IMR-90 (cell line): ENCODE measurements at regions of chr5 and their contacts with region 1.

Region 1: DNA sequence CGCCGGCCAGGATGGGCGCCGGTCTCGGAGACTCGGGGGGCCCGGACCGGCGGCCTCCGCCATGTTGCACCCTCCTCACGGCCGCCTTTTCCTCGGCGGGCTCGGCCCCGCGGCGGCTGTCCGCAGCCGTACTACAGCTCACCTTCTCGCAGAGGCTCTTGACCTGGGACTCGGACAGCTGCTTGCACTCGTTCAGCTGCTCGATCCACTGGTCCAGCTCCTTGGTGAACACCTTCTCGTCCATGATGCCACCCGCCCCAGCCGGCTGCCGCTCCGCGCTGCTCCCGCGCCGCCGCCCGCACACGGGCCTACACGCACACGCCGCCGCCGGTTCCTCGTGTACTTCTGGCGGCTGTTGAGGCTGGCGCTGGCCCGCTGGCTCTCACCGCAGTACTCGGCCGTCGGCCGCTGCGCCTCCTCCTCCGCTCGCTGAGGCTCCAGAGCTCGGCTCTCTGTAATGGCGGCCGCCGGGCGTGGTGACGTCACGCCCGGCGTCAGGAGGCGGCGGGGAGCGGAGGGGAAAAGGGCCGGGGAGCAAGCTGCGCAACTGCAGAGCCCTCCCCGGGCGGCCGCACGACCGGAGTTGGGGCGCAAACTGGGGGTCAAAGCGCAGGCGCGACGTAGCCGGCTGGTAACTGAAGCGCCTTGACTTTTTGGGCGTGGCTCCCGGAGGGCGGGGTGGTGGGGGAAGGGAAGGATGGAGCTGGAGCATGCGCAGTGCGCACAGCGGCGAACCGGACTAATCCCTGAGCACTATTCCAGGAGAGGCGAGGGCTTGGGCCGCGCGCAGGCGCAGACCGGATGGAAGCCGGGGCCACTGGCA is at the start of gene PPP2CA:
- DNase-seq: peak; percentile 98
- ATAC-seq: peak; percentile 93
- H3K4me3 ChIP-seq: peak within 1 kb of the TSS; percentile 68
- H3K27ac ChIP-seq: peak within 1 kb of the TSS; percentile 90
- H3K4me1 ChIP-seq: peaks cover 6% of the 10 kb centered on the region
- H3K27me3 ChIP-seq: no peaks in the 10 kb centered on the region
- CTCF ChIP-seq: no peak
- POLR2A ChIP-seq: peak; percentile 88
- RAD21 ChIP-seq: no peak
- total RNA-seq, gene PPP2CA: 70.6 and 191 TPM in 2 replicates

Region 2: DNA sequence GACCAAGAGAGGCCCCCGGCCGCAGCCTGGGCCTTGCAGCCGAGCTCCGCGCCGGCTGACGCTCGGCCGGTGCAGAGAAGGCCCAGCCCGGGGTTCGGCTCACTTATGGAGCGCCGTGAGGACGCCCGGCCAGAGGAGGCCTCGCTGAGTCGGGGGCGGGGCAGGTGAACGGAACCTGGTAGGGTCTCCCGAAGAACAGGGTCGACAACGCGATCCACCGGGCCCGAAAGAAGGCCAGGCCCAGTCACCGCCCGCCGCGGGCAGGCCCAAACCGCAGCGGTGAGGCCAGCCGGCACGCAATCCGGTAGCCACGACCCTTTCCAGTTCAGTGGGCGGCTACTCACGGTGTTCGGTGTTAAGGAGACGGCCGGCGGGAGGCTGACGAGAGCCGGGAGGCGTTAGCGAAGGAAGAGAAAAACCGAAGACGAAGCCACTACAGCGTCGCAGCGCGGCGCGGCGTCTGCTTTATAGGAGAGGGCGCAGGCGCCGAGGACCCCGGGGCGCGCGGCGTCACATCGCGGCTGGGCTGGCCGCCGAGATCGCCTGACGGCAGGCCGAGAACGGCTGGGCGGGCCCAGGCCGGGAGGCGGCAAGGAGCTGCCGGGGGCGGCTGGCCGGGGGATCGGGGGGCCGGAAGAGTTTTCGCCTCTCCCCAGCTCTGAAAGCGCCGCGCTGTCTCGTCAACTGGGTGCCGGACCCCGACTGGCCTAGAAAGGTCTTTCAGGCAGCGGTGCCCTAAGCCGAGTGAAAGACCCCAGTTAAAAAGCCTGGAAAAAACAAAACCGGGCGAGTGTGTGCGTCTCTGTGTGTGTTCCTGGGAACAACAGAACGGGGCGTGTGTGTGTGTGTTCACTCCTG is 49.1 kb before region 1 on chr5 and contains the start of gene SKP1:
- CTCF ChIA-PET with region 1: interaction called, 3 read pairs
- POLR2A ChIA-PET with region 1: no interaction called
- dilution Hi-C with region 1: no loop called
- in situ Hi-C with region 1: no loop called
- intact Hi-C with region 1: loop called (anchors 2 kb)
- DNase-seq: peak; percentile 71
- ATAC-seq: peak; percentile 91
- H3K4me3 ChIP-seq: peak within 1 kb of the TSS; percentile 92
- H3K27ac ChIP-seq: peak within 1 kb of the TSS; percentile 94
- H3K4me1 ChIP-seq: no peaks in the 10 kb centered on the region; the same call in 1 of the 2 replicates
- H3K27me3 ChIP-seq: no peaks in the 10 kb centered on the region
- CTCF ChIP-seq: no peak
- POLR2A ChIP-seq: peak; percentile 100
- RAD21 ChIP-seq: no peak
- total RNA-seq, gene SKP1: 206 and 360 TPM in 2 replicates

Region 3: GRCh38 chr5:134209477-134210240 is 16.2 kb before region 1 on chr5:
- CTCF ChIA-PET with region 1: interaction called, 3 read pairs
- POLR2A ChIA-PET with region 1: interaction called, 3 read pairs
- dilution Hi-C with region 1: no loop called
- in situ Hi-C with region 1: no loop called
- intact Hi-C with region 1: loop called (anchors 1 kb)
- DNase-seq: no peak
- ATAC-seq: no peak
- H3K4me3 ChIP-seq: no peak overlapping the region
- H3K27ac ChIP-seq: no peak overlapping the region
- H3K4me1 ChIP-seq: peaks cover 6% of the 10 kb centered on the region
- H3K27me3 ChIP-seq: no peaks in the 10 kb centered on the region
- CTCF ChIP-seq: no peak
- POLR2A ChIP-seq: no peak
- RAD21 ChIP-seq: no peak

Region 4: GRCh38 chr5:134245101-134245604 is 19.3 kb after region 1 on chr5:
- CTCF ChIA-PET with region 1: interaction called, 4 read pairs
- POLR2A ChIA-PET with region 1: interaction called, 13 read pairs
- dilution Hi-C with region 1: no loop called
- in situ Hi-C with region 1: no loop called
- intact Hi-C with region 1: no loop called
- DNase-seq: peak; percentile 86
- ATAC-seq: peak; percentile 59
- H3K4me3 ChIP-seq: peak overlapping the region; percentile 27; the same call in 1 of the 2 replicates
- H3K27ac ChIP-seq: peak overlapping the region; percentile 76
- H3K4me1 ChIP-seq: peaks cover 25% of the 10 kb centered on the region
- H3K27me3 ChIP-seq: no peaks in the 10 kb centered on the region
- CTCF ChIP-seq: no peak
- POLR2A ChIP-seq: no peak
- RAD21 ChIP-seq: no peak

Region 5: DNA sequence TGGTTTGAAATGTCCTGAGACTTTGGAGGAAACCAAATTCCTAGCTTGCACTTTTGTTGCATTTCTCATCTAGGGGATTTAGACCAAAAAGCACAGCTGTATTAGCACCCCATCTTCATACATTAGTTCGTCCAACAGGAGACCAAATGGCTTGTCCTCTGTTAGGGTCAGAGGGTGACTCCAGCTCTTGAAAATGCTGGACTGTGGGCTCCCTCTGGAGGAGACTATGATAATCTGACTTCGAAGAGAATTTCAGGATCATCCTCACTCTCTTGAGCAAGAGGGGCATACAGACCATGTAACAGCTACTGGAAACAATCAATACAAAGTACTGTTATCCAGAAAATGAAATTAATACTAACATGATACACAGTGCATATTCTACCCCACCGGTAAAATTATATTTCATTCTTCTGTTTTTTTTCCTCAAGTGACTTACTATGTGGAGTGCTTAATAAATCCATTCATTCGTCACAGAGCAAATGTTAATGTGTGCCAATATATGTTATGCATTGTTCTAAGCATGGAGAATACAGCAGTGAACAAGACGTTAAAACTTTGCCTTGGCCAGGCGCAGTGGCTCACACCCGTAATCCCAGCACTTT is 63.8 kb after region 1 on chr5:
- CTCF ChIA-PET with region 1: interaction called, 5 read pairs
- POLR2A ChIA-PET with region 1: no interaction called
- dilution Hi-C with region 1: no loop called
- in situ Hi-C with region 1: no loop called
- intact Hi-C with region 1: loop called (anchors 2 kb)
- DNase-seq: peak; percentile 83
- ATAC-seq: peak; percentile 99
- H3K4me3 ChIP-seq: no peak overlapping the region
- H3K27ac ChIP-seq: no peak overlapping the region
- H3K4me1 ChIP-seq: no peaks in the 10 kb centered on the region
- H3K27me3 ChIP-seq: no peaks in the 10 kb centered on the region; the same call in 1 of the 2 replicates
- CTCF ChIP-seq: peak; percentile 92
- POLR2A ChIP-seq: peak; percentile 63
- RAD21 ChIP-seq: peak; percentile 100